Activated naive CD4-positive, alpha-beta T cell treated with anti-CD3 and anti-CD28 coated beads, Interleukin-2, amount 10 ng/mL, durations not matched to agents 7 days and 5 days (primary cell): ENCODE measurements at regions of chr10 and their contacts with region 1.

Region 1: GRCh38 chr10:6920072-6921019 is 340.3 kb upstream of the PRKCQ start:
- DNase-seq: peak; percentile 85
- H3K4me3 Mint-ChIP-seq: no peak overlapping the region
- H3K27ac Mint-ChIP-seq: no peak overlapping the region
- H3K4me1 Mint-ChIP-seq: peaks cover 21% of the 10 kb centered on the region
- H3K27me3 Mint-ChIP-seq: peaks cover 11% of the 10 kb centered on the region

Region 2: GRCh38 chr10:7070950-7071349 is 150.6 kb after region 1 on chr10:
- CTCF ChIA-PET with region 1: interaction called, 18 read pairs
- DNase-seq: no peak
- H3K4me3 Mint-ChIP-seq: no peak overlapping the region
- H3K27ac Mint-ChIP-seq: no peak overlapping the region
- H3K4me1 Mint-ChIP-seq: no peaks in the 10 kb centered on the region
- H3K27me3 Mint-ChIP-seq: peaks cover 39% of the 10 kb centered on the region

Region 3: DNA sequence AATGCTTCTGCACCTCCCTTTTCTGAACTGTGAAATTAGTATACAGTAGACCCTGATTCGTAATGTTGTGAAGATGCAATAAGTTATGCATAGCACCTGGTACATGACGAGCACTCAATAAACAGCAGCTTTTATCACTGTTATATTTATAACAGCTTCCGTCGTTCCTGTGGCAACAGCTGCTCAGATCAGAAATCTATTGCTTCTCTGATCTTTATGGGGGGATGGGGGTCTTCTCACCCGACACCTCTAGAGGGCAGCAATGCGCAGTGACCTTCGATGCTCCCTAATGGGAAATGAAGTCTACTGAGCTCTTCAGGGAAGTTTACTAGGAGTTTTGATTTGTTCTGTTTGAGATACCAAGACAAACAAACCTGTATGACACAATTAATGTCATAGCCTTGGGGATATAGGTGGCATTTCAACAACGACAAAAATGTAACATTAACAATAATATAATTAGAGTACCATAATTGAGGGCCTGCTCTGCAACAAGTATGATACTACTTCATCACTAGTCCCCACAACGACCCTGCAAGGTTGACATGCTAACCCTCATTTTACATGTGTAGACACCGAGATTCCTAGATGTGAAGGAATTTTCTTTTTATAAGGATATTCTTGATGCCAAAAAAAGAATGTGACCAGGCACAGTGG is 200.9 kb after region 1 on chr10:
- CTCF ChIA-PET with region 1: interaction called, 23 read pairs
- DNase-seq: peak; percentile 83
- H3K4me3 Mint-ChIP-seq: no peak overlapping the region
- H3K27ac Mint-ChIP-seq: no peak overlapping the region
- H3K4me1 Mint-ChIP-seq: peaks cover 4% of the 10 kb centered on the region
- H3K27me3 Mint-ChIP-seq: peaks cover 35% of the 10 kb centered on the region

Region 4: GRCh38 chr10:7410862-7411670 is 490.7 kb after region 1 on chr10 and contains the start of gene SFMBT2:
- CTCF ChIA-PET with region 1: interaction called, 56 read pairs
- DNase-seq: peak; percentile 79
- H3K4me3 Mint-ChIP-seq: peak within 1 kb of the TSS; percentile 90
- H3K27ac Mint-ChIP-seq: peak within 1 kb of the TSS; percentile 92
- H3K4me1 Mint-ChIP-seq: peaks cover 51% of the 10 kb centered on the region
- H3K27me3 Mint-ChIP-seq: peaks cover 31% of the 10 kb centered on the region

Region 5: GRCh38 chr10:7417103-7417623 is 496.8 kb after region 1 on chr10:
- CTCF ChIA-PET with region 1: interaction called, 56 read pairs
- DNase-seq: no peak
- H3K4me3 Mint-ChIP-seq: no peak overlapping the region
- H3K27ac Mint-ChIP-seq: no peak overlapping the region
- H3K4me1 Mint-ChIP-seq: peaks cover 29% of the 10 kb centered on the region
- H3K27me3 Mint-ChIP-seq: peaks cover 24% of the 10 kb centered on the region

Region 6: GRCh38 chr10:7424315-7424714 is 504.0 kb after region 1 on chr10:
- CTCF ChIA-PET with region 1: interaction called, 11 read pairs
- DNase-seq: peak; percentile 43
- H3K4me3 Mint-ChIP-seq: no peak overlapping the region
- H3K27ac Mint-ChIP-seq: no peak overlapping the region
- H3K4me1 Mint-ChIP-seq: peaks cover 16% of the 10 kb centered on the region
- H3K27me3 Mint-ChIP-seq: peaks cover 19% of the 10 kb centered on the region